ENCODE measurements at regions of chr2 and their contacts with region 1.

Region 1: DNA sequence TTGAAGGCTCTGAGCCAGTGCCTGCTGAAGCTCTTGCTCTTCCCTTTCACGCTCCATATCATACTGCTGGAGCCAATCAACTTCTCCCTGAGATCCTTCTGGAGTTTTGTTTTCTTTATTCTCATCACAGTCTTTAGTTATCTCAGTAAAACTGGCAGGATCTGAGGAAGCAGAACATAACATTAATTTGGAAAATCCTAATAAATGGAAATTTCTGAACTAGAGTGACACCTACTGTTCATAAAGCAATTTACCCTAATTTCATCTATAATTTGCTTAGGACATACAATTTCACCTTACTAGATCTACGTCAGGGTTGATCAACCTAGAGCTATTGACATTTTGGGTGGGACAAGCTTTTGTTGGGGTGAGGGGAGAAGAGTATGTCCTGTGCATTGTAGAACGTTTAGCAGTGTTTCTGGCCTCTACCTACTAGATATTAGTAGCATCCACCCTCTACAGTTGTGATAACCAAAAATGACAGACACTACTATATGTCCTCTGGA is 47.1 kb downstream of the VIL1 start:
- DNase-seq: peak; percentile 52
- H3K4me3 ChIP-seq: no peak overlapping the region
- H3K27ac ChIP-seq: no peak overlapping the region
- H3K4me1 ChIP-seq: no peaks in the 10 kb centered on the region
- H3K27me3 ChIP-seq: no peaks in the 10 kb centered on the region
- CTCF ChIP-seq: peak in 1 of 2 donors; percentile 23
- POLR2A ChIP-seq: no peak

Region 2: DNA sequence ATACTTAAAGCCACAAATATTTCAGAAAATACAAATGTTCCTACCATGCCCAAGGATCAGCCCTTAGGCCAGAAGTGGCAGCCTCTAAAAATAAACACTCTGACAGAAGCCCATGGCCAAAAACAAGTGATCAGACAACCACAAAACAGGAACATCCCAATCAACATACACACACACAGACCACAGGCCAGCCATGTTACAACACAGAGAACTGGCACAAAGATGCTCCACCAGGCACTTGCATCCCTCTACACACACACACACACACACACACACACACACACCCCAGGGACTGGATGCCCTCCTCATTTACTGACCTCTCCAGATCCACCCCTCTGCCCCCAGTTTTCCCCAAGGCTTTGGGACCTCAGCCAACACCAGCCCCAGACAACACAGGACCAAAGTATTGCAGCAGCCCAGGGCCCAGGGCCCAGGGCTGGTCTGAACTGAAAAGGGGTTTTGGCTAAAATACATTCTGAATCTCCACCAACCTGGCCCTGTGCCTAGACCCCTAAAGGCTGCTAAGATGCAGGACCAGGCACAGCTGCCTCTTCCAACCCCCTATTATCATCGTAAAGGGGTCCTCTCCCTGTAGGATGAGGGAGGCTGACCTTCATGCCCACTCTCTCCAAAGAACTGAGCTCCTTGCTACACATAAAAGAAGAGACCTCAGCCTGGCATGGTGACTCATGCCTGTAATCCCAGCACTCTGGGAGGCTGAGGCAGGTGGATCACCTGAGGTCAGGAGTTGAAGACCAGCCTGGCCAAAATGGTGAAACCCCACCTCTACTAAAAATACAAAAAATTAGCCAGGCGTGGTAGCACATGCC is 614.7 kb before region 1 on chr2:
- CTCF ChIA-PET with region 1: no interaction called
- POLR2A ChIA-PET with region 1: no interaction called
- dilution Hi-C with region 1: no loop called
- intact Hi-C with region 1: no loop called
- DNase-seq: peak; percentile 18
- H3K4me3 ChIP-seq: no peak overlapping the region
- H3K27ac ChIP-seq: no peak overlapping the region
- H3K4me1 ChIP-seq: peaks cover 33% of the 10 kb centered on the region
- H3K27me3 ChIP-seq: no peaks in the 10 kb centered on the region
- CTCF ChIP-seq: no peak
- POLR2A ChIP-seq: no peak

Region 3: DNA sequence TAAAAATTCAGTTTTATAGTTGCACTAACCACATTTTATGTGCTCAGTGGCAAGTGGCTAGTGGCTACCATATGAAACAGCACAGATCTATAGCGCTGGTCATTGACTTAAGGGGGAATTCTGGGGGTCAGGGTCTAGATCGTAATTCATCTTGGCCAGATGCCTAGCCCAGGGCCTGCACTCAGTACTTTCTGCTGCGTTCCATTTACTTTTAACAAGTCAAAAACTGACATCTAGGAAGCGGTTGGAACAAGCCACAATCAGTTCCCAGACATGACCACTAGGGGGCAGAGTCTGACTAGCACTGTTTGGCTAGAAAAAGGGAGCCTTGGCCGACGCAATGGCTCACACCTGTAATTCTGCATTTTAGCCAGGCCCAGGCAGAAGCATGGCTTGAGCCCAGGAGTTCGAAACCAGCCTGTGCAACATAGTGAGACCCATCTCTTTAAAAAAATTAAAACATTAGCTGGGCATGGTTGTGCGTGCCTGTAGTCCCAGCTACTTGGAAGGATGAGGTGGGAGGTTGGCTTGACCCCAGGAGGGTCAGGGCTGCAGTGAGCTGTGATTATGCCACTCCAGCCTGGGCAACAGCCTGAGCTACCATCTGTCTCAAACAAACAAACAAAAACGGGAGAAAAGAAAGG is 164.8 kb before region 1 on chr2:
- CTCF ChIA-PET with region 1: interaction called, 5 read pairs
- POLR2A ChIA-PET with region 1: no interaction called
- dilution Hi-C with region 1: no loop called
- intact Hi-C with region 1: loop called (anchors 1 kb)
- DNase-seq: peak; percentile 88
- H3K4me3 ChIP-seq: no peak overlapping the region
- H3K27ac ChIP-seq: no peak overlapping the region
- H3K4me1 ChIP-seq: peaks cover 6% of the 10 kb centered on the region
- H3K27me3 ChIP-seq: no peaks in the 10 kb centered on the region
- CTCF ChIP-seq: peak; percentile 86
- POLR2A ChIP-seq: no peak

Region 4: GRCh38 chr2:218406209-218406948 is 59.7 kb before region 1 on chr2:
- CTCF ChIA-PET with region 1: interaction called, 26 read pairs
- POLR2A ChIA-PET with region 1: no interaction called
- dilution Hi-C with region 1: no loop called
- intact Hi-C with region 1: loop called (anchors 1 kb)
- DNase-seq: peak; percentile 94
- H3K4me3 ChIP-seq: peak overlapping the region; percentile 16 to 25 (median 18)
- H3K27ac ChIP-seq: peak overlapping the region; percentile 81
- H3K4me1 ChIP-seq: peaks cover 22% of the 10 kb centered on the region
- H3K27me3 ChIP-seq: no peaks in the 10 kb centered on the region
- CTCF ChIP-seq: peak; percentile 66 to 91
- POLR2A ChIP-seq: peak; percentile 80

Region 5: GRCh38 chr2:218448934-218449333 is 17.1 kb before region 1 on chr2:
- CTCF ChIA-PET with region 1: interaction called, 14 read pairs
- POLR2A ChIA-PET with region 1: no interaction called
- dilution Hi-C with region 1: no loop called
- intact Hi-C with region 1: no loop called
- DNase-seq: peak; percentile 56
- H3K4me3 ChIP-seq: no peak overlapping the region
- H3K27ac ChIP-seq: no peak overlapping the region
- H3K4me1 ChIP-seq: peaks cover 20% of the 10 kb centered on the region
- H3K27me3 ChIP-seq: no peaks in the 10 kb centered on the region
- CTCF ChIP-seq: no peak
- POLR2A ChIP-seq: no peak

Region 6: DNA sequence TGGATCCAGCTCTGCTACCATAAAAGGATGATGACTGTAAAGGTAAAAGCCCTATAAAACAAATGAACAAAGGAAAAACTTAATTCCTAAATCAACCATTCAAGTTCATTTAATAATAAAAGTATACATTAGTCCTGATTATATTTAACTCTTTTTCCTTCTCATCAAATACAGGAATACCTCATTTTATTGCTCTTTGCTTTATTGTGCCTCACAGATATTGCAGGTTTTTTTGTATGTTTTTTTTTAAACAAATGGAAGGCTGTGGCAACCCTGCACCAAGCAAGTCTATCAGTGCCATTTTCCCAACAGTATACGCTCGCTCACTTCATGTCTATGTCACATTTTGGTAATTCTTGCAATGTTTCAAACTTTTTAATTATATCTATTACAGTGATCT is 63.9 kb after region 1 on chr2:
- CTCF ChIA-PET with region 1: no interaction called
- POLR2A ChIA-PET with region 1: no interaction called
- dilution Hi-C with region 1: no loop called
- intact Hi-C with region 1: no loop called
- DNase-seq: no peak
- H3K4me3 ChIP-seq: no peak overlapping the region
- H3K27ac ChIP-seq: no peak overlapping the region
- H3K4me1 ChIP-seq: no peaks in the 10 kb centered on the region
- H3K27me3 ChIP-seq: no peaks in the 10 kb centered on the region
- CTCF ChIP-seq: no peak
- POLR2A ChIP-seq: no peak

Region 7: GRCh38 chr2:218710687-218711549 is 244.8 kb after region 1 on chr2 and contains the start of gene TTLL4:
- CTCF ChIA-PET with region 1: no interaction called
- POLR2A ChIA-PET with region 1: no interaction called
- dilution Hi-C with region 1: no loop called
- intact Hi-C with region 1: no loop called
- DNase-seq: peak; percentile 95
- H3K4me3 ChIP-seq: peak within 1 kb of the TSS; percentile 89 to 98 (median 93)
- H3K27ac ChIP-seq: peak within 1 kb of the TSS; percentile 60
- H3K4me1 ChIP-seq: peaks cover 14% of the 10 kb centered on the region
- H3K27me3 ChIP-seq: no peaks in the 10 kb centered on the region
- CTCF ChIP-seq: peak; percentile 81 to 82
- POLR2A ChIP-seq: peak; percentile 84
- total RNA-seq, gene TTLL4: 41.0 and 45.0 TPM in 2 replicates